ENCODE measurements at regions of chr13 and their contacts with region 1.

Region 1: DNA sequence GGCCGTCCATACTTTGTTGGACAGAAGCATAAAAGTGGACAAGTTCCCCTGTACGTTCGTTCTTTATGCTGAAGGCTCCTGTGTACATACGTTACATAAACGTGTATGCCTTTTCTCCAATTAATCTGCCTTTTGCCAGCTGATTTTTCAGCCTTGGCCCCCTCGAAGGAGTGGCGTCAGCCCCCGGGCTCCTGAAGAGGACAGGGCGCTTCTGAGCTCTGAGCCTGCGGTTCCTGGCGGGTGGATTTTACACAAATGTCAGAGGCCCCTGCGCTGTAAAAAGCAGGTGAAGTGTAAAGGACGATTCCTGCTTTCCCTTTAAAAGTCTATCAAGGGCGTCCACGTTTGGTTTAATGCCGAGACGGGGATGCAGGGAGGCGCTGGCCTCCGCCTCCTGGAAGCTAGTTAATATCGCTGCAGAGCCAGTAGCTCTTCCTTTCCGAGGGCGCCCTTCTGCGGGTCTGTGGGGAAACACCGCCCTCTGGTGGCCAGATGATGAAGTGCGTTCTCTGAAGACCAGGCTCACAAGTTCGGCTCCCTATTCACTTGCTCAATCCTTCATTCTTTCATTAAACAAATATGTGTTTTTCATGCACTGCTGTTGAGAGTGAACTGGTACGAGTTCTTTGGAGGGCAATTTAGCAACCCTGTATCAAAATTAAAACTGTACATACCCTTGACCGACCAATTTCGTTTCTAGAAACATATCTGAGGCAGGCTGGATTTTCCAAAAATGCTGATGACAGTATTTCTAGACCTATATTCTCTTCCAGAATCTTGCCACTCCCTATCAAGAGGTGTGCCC is 62.0 kb downstream of the GPR12 start:
- DNase-seq: peak; percentile 77 to 83
- ATAC-seq: peak; percentile 71 to 91 (median 86)
- H3K4me3 ChIP-seq: peak overlapping the region in 6 of 10 donors; percentile 12 to 43 (median 32)
- H3K27ac ChIP-seq: no peak overlapping the region
- H3K4me1 ChIP-seq: peaks cover 0 to 7% (median 5%) of the 10 kb centered on the region in 9 donors
- H3K27me3 ChIP-seq: peaks cover 0 to 4% (median 0%) of the 10 kb centered on the region in 7 donors
- CTCF ChIP-seq: peak; percentile 89 to 99 (median 98)

Region 2: DNA sequence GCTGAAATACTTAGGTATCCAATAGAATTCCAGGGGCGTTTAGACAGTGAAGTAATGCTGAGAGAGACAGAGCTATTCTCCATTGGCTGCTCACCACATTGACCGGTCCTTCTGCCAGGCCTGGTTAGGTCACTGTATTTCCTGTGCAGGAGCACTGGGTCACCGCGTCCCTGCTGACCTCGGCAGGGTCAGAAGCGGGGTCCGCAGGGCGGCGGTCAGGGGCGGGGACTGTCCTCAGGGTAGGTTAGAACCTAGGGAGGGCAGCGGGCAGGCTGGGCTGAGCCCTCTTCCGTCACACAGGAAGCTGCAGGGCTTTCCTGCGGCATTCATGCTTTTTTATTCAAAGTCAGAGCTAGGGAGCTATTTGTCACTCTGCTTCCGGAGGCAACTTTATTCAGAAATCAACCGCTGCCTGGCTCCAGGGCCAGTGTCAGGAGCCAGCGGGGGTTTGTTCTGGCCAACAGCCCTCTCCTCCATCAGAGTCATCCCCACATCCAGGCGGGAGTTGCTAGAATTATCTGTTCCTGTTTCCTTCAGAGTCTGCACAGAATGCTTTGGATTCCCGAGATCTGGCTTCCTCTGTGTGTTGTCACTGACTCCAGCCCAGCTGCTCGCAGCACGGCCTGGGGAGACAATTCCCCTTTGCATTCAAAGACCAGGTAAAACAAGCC is 222.3 kb before region 1 on chr13:
- intact Hi-C with region 1: loop called in 4 of 10 experiments (anchors 5 to 10 kb)
- DNase-seq: peak in 1 of 2 donors; percentile 35
- ATAC-seq: peak; percentile 78 to 87 (median 82)
- H3K4me3 ChIP-seq: peak overlapping the region in 8 of 10 donors; percentile 13 to 49 (median 34)
- H3K27ac ChIP-seq: peak overlapping the region in 9 of 10 donors; percentile 59 to 93 (median 68)
- H3K4me1 ChIP-seq: peaks cover 0 to 28% (median 11%) of the 10 kb centered on the region in 9 donors
- H3K27me3 ChIP-seq: no peaks in the 10 kb centered on the region
- CTCF ChIP-seq: no peak

Region 3: GRCh38 chr13:26482451-26483197 is 216.0 kb before region 1 on chr13:
- intact Hi-C with region 1: loop called (anchors 1 to 10 kb)
- DNase-seq: peak in 1 of 2 donors; percentile 62
- ATAC-seq: peak in 3 of 8 donors; percentile 39 to 50 (median 46)
- H3K4me3 ChIP-seq: no peak overlapping the region
- H3K27ac ChIP-seq: peak overlapping the region in 1 of 10 donors; percentile 27
- H3K4me1 ChIP-seq: peaks cover 0 to 14% (median 3%) of the 10 kb centered on the region in 9 donors
- H3K27me3 ChIP-seq: no peaks in the 10 kb centered on the region
- CTCF ChIP-seq: peak; percentile 75 to 92 (median 87)

Region 4: DNA sequence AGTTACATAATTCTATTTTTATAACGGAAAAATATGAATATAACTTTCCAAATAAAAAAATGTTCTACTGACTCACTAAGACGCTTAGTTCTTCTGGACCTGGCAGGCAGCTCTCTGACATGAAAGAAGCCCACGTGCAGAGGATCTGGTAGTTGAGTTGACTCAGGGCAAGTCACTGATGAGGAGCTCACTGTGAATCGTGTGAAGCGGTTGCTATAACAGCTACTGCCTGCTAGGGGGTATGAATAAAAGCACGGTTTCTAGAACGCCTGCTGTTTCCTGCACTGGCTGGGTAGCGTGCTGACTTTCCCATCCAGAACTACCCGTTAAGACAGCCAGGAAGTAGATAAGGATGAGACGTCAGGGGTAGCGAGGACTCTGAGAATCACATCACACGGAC is 195.8 kb before region 1 on chr13:
- intact Hi-C with region 1: loop called in 6 of 10 experiments (anchors 5 kb)
- DNase-seq: no peak
- ATAC-seq: peak; percentile 16 to 80 (median 45)
- H3K4me3 ChIP-seq: no peak overlapping the region
- H3K27ac ChIP-seq: no peak overlapping the region
- H3K4me1 ChIP-seq: peaks cover 0 to 7% (median 0%) of the 10 kb centered on the region in 9 donors
- H3K27me3 ChIP-seq: peaks cover 0 to 8% (median 3%) of the 10 kb centered on the region in 7 donors
- CTCF ChIP-seq: peak in 1 of 9 donors; percentile 20

Region 5: DNA sequence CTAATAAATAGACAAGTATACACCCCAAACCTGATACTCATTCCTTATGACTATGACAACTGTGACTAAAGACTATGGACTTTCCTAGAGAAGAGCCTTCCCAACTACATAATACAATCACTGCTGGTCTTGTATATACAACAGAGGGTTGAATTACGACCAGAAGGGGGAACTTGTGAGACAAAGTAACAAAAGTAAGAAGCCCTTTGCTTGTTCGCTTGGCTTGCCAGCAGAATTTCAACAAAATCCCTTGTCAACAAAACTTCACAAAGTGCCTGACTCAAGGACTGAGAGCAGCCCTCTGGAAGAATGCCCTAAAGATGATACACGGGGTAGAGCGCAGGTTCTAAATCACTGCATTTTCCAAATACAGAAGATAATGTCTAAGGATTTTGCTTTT is 41.7 kb before region 1 on chr13:
- intact Hi-C with region 1: loop called in 1 of 10 experiments (anchors 5 kb)
- DNase-seq: no peak
- ATAC-seq: peak in 1 of 8 donors; percentile 43
- H3K4me3 ChIP-seq: no peak overlapping the region
- H3K27ac ChIP-seq: no peak overlapping the region
- H3K4me1 ChIP-seq: peaks cover 0 to 31% (median 8%) of the 10 kb centered on the region in 9 donors
- H3K27me3 ChIP-seq: no peaks in the 10 kb centered on the region
- CTCF ChIP-seq: peak in 1 of 9 donors; percentile 40

Measured in heart right ventricle (tissue), 16 donors.